ENCODE measurements at regions of chr6 and their contacts with region 1.

Region 1: DNA sequence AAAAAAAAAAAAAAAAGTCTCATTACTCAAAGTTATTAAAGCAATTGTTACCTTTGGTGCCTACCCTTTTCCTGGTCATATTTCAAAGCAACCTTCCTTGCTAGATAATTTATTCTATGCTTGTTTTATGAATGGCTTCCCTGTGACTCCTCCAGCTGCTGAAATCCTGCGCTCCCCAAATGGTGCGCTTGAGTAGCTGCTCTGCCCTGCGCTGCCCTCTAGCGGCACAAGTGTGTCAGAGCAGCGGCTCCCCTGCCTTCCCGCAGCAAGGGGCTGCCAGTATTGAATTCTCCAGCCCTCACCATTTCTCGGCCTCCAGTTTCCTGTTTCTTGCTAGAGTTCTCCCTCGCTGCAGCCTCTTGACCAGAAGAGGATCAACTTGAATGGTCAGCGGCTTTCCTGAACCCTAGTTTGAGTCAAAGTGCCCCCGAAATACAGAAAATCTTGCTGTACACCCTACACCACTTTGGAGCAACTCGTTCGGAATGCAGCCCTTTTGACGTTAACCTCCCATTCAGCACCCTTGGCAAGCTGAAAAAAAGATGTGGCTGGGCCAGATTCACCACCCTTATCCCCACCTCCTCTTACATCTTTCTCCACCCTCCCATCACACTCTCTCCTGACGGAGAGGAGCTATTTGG is 60.4 kb upstream of the KLHL31 start:
- DNase-seq: no peak
- H3K4me3 ChIP-seq: no peak overlapping the region
- CTCF ChIP-seq: peak; percentile 98

Region 2: DNA sequence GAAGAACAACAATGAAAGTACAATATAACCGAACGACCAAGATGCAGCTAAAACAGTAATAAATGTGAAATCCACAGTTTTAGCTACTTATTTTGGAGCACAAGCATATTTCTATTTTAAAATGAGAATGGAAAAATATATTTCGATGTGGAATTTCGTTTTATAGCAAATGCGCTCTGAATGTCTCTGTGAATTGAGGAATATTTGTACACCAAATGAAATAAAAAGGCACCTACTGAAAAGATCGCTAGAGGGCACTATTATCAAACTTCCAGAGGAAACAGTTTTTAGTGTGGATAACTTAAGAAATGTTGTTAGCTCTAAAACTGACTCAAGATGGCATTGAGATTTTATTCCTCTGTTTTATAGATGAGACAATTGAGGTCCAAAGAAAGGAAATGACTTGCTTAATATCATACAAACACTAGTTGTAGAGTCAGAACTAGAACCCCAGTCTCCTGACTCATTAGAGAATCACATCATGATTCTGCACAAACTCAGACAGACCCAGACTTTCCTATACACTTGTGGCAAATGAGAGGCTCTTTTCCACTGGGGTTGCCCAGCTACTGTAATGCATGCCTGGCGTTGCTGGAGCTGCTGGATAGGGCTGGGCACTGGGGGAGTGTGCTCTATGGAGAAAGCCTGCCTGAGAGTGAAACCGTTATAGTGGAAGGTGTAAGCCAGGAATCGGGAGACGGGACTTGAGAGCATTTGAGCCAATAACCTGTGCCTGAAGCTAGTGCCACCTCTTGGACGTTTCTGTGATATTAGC is 232.9 kb before region 1 on chr6:
- CTCF ChIA-PET with region 1: interaction called, 432 read pairs
- POLR2A ChIA-PET with region 1: no interaction called
- DNase-seq: no peak
- H3K4me3 ChIP-seq: peak overlapping the region; percentile 31
- CTCF ChIP-seq: peak; percentile 35

Region 3: GRCh38 chr6:53659458-53659857 is 66.5 kb before region 1 on chr6:
- CTCF ChIA-PET with region 1: interaction called, 11 read pairs
- POLR2A ChIA-PET with region 1: no interaction called
- DNase-seq: no peak
- H3K4me3 ChIP-seq: no peak overlapping the region
- CTCF ChIP-seq: no peak

Region 4: GRCh38 chr6:53710788-53711187 is 15.1 kb before region 1 on chr6:
- CTCF ChIA-PET with region 1: interaction called, 124 read pairs
- POLR2A ChIA-PET with region 1: no interaction called
- DNase-seq: no peak
- H3K4me3 ChIP-seq: no peak overlapping the region
- CTCF ChIP-seq: no peak

Region 5: GRCh38 chr6:53761036-53761435 is 35.1 kb after region 1 on chr6:
- CTCF ChIA-PET with region 1: interaction called, 10 read pairs
- POLR2A ChIA-PET with region 1: no interaction called
- DNase-seq: no peak
- H3K4me3 ChIP-seq: no peak overlapping the region
- CTCF ChIP-seq: no peak

Region 6: GRCh38 chr6:53956068-53956711 is 230.3 kb after region 1 on chr6:
- CTCF ChIA-PET with region 1: interaction called, 309 read pairs
- POLR2A ChIA-PET with region 1: no interaction called
- DNase-seq: no peak
- H3K4me3 ChIP-seq: no peak overlapping the region
- CTCF ChIP-seq: peak; percentile 91